ENCODE measurements at regions of chr11 and their contacts with region 1.

Region 1: GRCh38 chr11:36265793-36266628 is 23.2 kb downstream of the COMMD9 start:
- DNase-seq: peak; percentile 66
- ATAC-seq: peak; percentile 77
- H3K4me3 Mint-ChIP-seq: no peak overlapping the region
- H3K27ac Mint-ChIP-seq: no peak overlapping the region
- H3K4me1 Mint-ChIP-seq: no peaks in the 10 kb centered on the region
- H3K27me3 Mint-ChIP-seq: peaks cover 2% of the 10 kb centered on the region
- CTCF ChIP-seq: peak; percentile 91

Region 2: DNA sequence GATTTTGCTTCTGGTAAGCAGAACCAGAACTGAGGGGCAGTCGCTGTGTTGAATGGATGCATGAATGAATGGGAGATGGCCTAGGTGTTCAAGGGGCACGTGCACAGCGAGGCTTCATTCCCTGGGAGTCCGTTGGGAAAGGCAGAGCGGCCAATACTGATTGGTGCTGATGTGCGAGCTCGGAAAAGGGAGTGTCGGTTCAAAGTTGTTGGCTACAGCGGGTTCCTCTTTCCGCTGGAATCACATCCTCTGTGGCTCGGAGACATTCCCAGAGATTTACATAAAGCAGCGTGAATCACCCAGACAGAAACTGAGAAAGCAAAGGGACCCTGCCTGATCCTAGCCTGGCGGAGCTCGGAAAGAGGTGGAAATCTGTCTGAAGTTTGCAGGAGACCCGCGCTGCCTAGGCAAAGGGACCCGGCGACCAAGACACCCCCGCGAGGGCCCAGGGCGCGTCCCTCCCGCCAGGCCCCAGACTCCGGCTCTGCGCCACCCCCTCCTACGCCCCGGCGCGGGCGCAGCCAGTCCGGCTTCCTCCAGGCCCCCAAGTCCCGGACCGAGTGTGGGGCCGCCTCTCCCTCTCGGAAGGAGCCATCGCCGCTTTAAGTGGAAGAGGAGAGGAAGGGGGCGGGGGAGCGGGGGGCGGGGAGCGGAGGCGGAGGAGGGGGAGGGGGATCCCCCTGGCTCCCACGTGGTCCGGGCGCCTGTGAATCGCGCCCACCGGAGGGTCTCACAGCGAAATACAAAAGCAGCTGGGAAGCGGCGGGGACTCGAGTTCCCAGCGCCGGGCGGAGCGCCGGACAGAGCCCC is 648.1 kb before region 1 on chr11 and contains the start of gene FJX1:
- CTCF ChIA-PET with region 1: interaction called, 25 read pairs
- POLR2A ChIA-PET with region 1: no interaction called
- intact Hi-C with region 1: loop called (anchors 5 kb)
- DNase-seq: peak; percentile 34
- ATAC-seq: peak; percentile 19
- H3K4me3 Mint-ChIP-seq: peak within 1 kb of the TSS; percentile 66
- H3K27ac Mint-ChIP-seq: no peak within 1 kb of the TSS
- H3K4me1 Mint-ChIP-seq: peaks cover 8% of the 10 kb centered on the region
- H3K27me3 Mint-ChIP-seq: peaks cover 49% of the 10 kb centered on the region
- CTCF ChIP-seq: no peak
- total RNA-seq, gene FJX1: 1.4 to 2.1 TPM

Region 3: DNA sequence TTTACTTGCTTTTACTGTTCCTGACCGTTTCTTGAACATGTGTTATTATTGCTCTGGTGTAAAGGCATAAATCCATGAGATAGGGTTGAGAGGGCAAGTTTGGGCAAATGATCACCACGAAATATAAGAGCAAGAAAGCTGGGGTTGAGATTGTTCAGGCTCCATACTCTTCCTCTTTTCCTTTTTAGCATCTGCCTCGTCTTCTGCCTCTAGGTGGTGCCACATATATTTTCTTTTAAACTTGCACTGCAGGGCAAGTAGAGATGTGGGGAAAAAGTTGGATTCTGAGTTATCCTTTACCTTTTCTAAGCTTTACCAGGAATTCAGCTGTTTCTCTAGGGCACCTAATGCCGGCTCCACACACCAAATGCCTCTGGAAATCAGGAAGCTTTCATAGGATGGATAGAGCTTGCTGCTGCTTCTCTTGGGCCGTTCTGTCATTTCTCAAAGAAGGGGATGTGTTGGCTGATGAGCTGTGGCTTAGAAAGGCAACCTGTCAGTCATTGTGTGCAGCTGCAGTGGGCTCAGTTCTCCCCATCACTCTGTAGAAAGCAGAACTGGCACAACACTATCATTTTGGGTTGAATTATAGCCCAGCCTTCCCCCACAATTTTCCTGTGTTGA is 223.9 kb before region 1 on chr11:
- CTCF ChIA-PET with region 1: interaction called, 7 read pairs
- POLR2A ChIA-PET with region 1: no interaction called
- intact Hi-C with region 1: loop called (anchors 5 kb)
- DNase-seq: peak; percentile 4
- ATAC-seq: no peak
- H3K4me3 Mint-ChIP-seq: no peak overlapping the region
- H3K27ac Mint-ChIP-seq: no peak overlapping the region
- H3K4me1 Mint-ChIP-seq: no peaks in the 10 kb centered on the region
- H3K27me3 Mint-ChIP-seq: peaks cover 1% of the 10 kb centered on the region
- CTCF ChIP-seq: peak; percentile 11

Region 4: GRCh38 chr11:36249246-36249645 is 16.8 kb before region 1 on chr11:
- CTCF ChIA-PET with region 1: interaction called, 34 read pairs
- POLR2A ChIA-PET with region 1: no interaction called
- intact Hi-C with region 1: no loop called
- DNase-seq: peak; percentile 7
- ATAC-seq: peak; percentile 56
- H3K4me3 Mint-ChIP-seq: no peak overlapping the region
- H3K27ac Mint-ChIP-seq: no peak overlapping the region
- H3K4me1 Mint-ChIP-seq: peaks cover 2% of the 10 kb centered on the region
- H3K27me3 Mint-ChIP-seq: peaks cover 20% of the 10 kb centered on the region
- CTCF ChIP-seq: no peak

Region 5: GRCh38 chr11:36280531-36280930 is 14.5 kb after region 1 on chr11:
- CTCF ChIA-PET with region 1: interaction called, 21 read pairs
- POLR2A ChIA-PET with region 1: no interaction called
- intact Hi-C with region 1: no loop called
- DNase-seq: no peak
- ATAC-seq: no peak
- H3K4me3 Mint-ChIP-seq: no peak overlapping the region
- H3K27ac Mint-ChIP-seq: no peak overlapping the region
- H3K4me1 Mint-ChIP-seq: peaks cover 14% of the 10 kb centered on the region
- H3K27me3 Mint-ChIP-seq: no peaks in the 10 kb centered on the region
- CTCF ChIP-seq: no peak

Region 6: GRCh38 chr11:36790526-36790925 is 524.5 kb after region 1 on chr11:
- CTCF ChIA-PET with region 1: no interaction called
- POLR2A ChIA-PET with region 1: no interaction called
- intact Hi-C with region 1: no loop called
- DNase-seq: no peak
- ATAC-seq: no peak
- H3K4me3 Mint-ChIP-seq: no peak overlapping the region
- H3K27ac Mint-ChIP-seq: no peak overlapping the region
- H3K4me1 Mint-ChIP-seq: no peaks in the 10 kb centered on the region
- H3K27me3 Mint-ChIP-seq: peaks cover 13% of the 10 kb centered on the region
- CTCF ChIP-seq: no peak